B cell (primary cell): ENCODE measurements at regions of chrX and their contacts with region 1.

Region 1: DNA sequence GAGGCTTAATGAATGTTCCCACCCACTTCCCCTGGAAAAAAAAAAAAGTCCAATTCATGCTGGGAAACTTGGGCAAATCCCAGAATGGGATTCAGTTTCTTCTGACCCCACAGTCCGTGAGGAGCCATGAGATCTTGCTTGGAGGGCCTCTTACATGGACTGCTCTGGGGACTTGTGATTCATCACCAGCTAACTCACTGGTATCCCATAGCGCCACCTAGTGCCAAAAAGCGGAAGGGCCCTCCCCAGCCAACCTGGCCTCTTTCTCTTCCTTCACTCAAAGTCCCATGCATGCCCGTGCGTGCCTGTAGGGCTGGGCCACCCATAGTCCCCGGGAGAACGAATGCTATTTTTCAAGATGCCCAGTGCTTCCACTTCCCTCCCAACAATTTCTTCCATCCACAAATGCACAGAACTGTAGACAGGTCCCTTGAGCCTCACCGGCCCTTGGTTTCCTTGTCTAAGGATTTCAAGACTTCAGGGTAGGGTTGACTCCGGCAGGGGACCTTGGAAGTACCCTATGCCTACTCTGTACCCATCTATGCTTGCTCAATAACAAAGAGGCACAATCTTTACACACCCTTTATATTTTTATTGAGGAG is 5.1 kb downstream of the RTL5 start:
- DNase-seq: peak; percentile 80
- ATAC-seq: peak; percentile 62
- H3K4me3 ChIP-seq: no peak overlapping the region
- H3K4me3 Mint-ChIP-seq: no peak overlapping the region
- H3K27ac ChIP-seq: no peak overlapping the region
- H3K27ac Mint-ChIP-seq: peak overlapping the region; percentile 21
- H3K4me1 ChIP-seq: peaks cover 12 to 27% of the 10 kb centered on the region in 2 donors
- H3K4me1 Mint-ChIP-seq: peaks cover 34% of the 10 kb centered on the region
- H3K27me3 ChIP-seq: peaks cover 0 to 5% (median 2%) of the 10 kb centered on the region in 4 experiments
- H3K27me3 Mint-ChIP-seq: peaks cover 4% of the 10 kb centered on the region
- CTCF ChIP-seq: peak; percentile 70

Region 2: DNA sequence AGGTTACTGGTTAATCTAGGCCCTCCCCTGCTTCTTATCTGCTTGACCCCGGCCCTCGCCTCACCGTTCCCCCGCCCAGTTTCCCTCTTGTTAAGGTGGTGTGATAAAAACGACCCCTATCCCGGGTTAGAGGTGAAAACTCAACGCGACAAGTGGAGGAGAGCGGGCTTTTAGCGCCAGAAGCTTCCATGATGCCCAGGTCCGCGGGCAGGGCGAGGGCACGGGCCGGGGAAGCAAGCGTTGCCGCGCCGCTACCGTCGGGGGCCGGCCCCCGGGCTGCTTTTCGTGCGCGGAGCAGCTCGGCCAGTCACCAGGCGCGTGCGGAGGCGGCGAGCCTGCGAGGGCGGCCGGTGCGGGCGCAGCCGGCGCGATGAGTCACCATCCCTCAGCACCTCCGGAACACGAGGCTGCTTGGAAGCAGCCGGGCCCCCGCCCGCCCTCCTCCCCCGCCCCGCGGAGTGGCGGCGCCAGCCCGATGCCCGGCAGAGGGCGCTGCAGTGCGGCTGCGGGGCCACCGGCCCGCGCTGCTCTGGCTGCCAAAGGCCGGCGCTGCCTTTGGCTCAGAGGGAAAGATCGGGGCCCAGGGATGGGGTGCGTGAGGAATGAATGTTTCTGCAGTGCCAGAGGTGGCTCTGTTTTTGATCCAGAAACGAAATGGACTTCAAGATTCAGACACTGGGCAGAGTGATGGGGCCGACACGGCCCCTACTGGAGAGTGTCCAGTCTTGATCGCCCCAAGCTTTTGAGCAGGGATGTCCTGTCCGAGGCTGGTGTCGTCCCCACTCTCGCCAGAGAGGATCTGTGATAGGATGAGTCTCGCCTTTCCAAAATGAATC is 108.1 kb before region 1 on chrX:
- CTCF ChIA-PET with region 1: interaction called, 108 read pairs
- POLR2A ChIA-PET with region 1: interaction called, 4 read pairs
- intact Hi-C with region 1: loop called (anchors 1 kb)
- DNase-seq: peak; percentile 78
- ATAC-seq: peak; percentile 82
- H3K4me3 ChIP-seq: peak overlapping the region in 2 of 5 experiments; percentile 11 to 20
- H3K4me3 Mint-ChIP-seq: peak overlapping the region; percentile 29
- H3K27ac ChIP-seq: no peak overlapping the region
- H3K27ac Mint-ChIP-seq: no peak overlapping the region
- H3K4me1 ChIP-seq: peaks cover 13 to 22% of the 10 kb centered on the region in 2 donors
- H3K4me1 Mint-ChIP-seq: peaks cover 9% of the 10 kb centered on the region
- H3K27me3 ChIP-seq: peaks cover 0 to 26% (median 19%) of the 10 kb centered on the region in 4 experiments
- H3K27me3 Mint-ChIP-seq: peaks cover 9% of the 10 kb centered on the region
- CTCF ChIP-seq: peak; percentile 76

Region 3: DNA sequence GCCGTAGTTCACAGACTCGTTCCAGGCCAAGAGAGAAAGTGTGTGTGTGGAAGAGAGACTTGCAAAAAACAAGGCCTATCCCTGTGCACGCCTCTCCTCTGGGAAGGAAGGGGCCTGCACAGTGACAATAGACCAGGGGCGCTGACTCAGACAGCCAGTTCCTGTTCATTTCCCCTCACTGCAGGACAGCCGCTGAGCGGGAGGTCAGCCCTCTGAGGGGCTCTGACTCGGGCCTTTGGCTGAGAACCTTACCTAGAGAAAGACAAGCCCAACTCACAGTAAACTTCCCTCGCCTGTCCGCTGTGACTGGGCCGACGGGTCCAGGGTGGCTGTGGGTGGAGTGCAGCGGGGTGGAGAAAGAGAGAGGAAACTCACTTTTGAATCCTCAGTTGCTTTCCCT is 47.0 kb before region 1 on chrX:
- CTCF ChIA-PET with region 1: no interaction called
- POLR2A ChIA-PET with region 1: no interaction called
- intact Hi-C with region 1: no loop called
- DNase-seq: no peak
- ATAC-seq: no peak
- H3K4me3 ChIP-seq: no peak overlapping the region
- H3K4me3 Mint-ChIP-seq: no peak overlapping the region
- H3K27ac ChIP-seq: no peak overlapping the region
- H3K27ac Mint-ChIP-seq: no peak overlapping the region
- H3K4me1 ChIP-seq: no peaks in the 10 kb centered on the region
- H3K4me1 Mint-ChIP-seq: peaks cover 4% of the 10 kb centered on the region
- H3K27me3 ChIP-seq: peaks cover 0 to 5% (median 0%) of the 10 kb centered on the region in 4 experiments
- H3K27me3 Mint-ChIP-seq: peaks cover 12% of the 10 kb centered on the region
- CTCF ChIP-seq: no peak

Region 4: DNA sequence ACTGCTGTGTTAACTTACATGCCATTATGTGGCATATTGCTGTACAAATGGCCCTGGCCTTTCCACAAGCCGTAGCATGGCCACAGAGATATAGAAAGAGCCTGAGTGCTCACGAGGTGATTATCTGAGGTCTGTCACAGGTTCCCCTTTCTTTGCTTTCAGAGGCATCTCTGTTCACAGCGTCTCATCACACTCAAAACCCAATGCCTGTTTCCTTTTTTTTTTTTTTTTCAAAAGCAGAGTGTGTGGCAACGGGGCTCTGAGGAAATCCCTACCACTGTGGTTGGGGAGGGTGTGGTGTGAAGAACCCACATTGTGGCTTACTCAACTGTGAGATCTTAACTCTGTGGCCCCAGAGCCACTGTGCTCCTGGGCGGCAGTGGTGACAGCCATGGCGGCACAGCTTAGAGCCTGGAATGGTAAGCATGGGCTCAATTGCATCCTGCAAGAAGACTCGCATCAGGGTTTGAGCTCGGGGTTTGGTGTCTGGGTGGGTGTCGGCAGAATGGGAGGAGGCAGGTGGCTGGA is 25.8 kb before region 1 on chrX:
- CTCF ChIA-PET with region 1: interaction called, 8 read pairs
- POLR2A ChIA-PET with region 1: no interaction called
- intact Hi-C with region 1: loop called (anchors 2 kb)
- DNase-seq: peak; percentile 88
- ATAC-seq: peak; percentile 78
- H3K4me3 ChIP-seq: peak overlapping the region in 2 of 5 experiments; percentile 7 to 36
- H3K4me3 Mint-ChIP-seq: peak overlapping the region; percentile 80
- H3K27ac ChIP-seq: peak overlapping the region; percentile 56 to 60
- H3K27ac Mint-ChIP-seq: peak overlapping the region; percentile 87
- H3K4me1 ChIP-seq: peaks cover 33 to 50% of the 10 kb centered on the region in 2 donors
- H3K4me1 Mint-ChIP-seq: peaks cover 52% of the 10 kb centered on the region
- H3K27me3 ChIP-seq: peaks cover 0 to 18% (median 2%) of the 10 kb centered on the region in 4 experiments
- H3K27me3 Mint-ChIP-seq: no peaks in the 10 kb centered on the region
- CTCF ChIP-seq: no peak

Region 5: DNA sequence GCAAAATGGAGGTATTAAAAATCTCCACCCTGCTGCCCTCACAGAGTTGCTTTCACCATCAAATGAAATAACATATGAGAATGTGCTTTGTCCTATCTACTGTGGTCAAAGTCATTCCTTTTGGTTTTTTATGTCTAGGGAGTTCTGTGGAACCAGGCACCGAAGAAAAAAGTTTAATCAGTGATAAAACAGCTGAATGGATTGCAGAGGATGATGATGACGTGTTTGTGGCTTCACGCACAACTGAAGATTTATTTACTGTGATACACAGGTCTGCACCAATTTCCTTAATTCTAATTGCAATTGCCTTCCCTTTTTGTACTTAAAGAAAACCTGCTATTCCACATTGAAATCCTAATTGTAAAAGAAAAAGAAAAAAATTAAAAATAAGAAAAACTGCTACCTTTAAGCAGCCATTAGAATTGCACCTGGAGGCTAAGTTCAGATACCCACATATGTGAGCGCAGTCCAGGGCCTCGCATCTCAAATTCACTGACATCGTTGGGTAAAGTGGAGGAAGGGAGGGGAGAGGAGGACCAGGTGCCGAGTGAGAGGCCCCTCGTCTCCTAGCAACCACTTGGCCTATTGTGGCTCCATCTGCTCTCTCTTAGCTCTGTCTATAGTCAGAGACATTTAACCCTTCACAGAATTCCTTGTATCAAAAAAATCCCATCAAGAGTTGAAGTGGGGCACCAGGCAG is 15.6 kb after region 1 on chrX:
- CTCF ChIA-PET with region 1: interaction called, 7 read pairs
- POLR2A ChIA-PET with region 1: interaction called, 8 read pairs
- intact Hi-C with region 1: loop called (anchors 2 kb)
- DNase-seq: peak; percentile 35
- ATAC-seq: peak; percentile 81
- H3K4me3 ChIP-seq: no peak overlapping the region
- H3K4me3 Mint-ChIP-seq: peak overlapping the region; percentile 31
- H3K27ac ChIP-seq: no peak overlapping the region
- H3K27ac Mint-ChIP-seq: peak overlapping the region; percentile 71
- H3K4me1 ChIP-seq: peaks cover 4 to 7% of the 10 kb centered on the region in 2 donors
- H3K4me1 Mint-ChIP-seq: peaks cover 19% of the 10 kb centered on the region
- H3K27me3 ChIP-seq: peaks cover 0 to 4% (median 0%) of the 10 kb centered on the region in 4 experiments
- H3K27me3 Mint-ChIP-seq: peaks cover 4% of the 10 kb centered on the region
- CTCF ChIP-seq: no peak

Region 6: DNA sequence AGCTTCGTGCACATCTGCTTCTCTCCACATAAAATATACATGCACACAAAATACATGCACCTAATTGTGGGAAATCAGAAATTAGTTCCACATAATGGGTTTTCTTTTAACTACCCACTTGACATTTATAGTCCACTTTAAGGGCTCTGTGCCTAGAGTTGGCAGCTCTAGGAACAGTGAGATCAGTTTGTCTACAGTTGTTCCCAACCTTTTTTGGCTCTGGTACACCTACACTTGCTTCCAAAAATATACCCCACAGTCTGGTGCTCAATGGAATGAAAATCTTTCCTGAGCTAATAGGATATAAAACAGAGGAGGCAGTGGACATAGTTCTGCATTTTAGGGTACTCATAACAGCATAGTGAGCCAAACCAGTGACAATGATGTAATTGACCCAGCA is 409.9 kb after region 1 on chrX:
- CTCF ChIA-PET with region 1: no interaction called
- POLR2A ChIA-PET with region 1: no interaction called
- intact Hi-C with region 1: no loop called
- DNase-seq: no peak
- ATAC-seq: no peak
- H3K4me3 ChIP-seq: no peak overlapping the region
- H3K4me3 Mint-ChIP-seq: no peak overlapping the region
- H3K27ac ChIP-seq: no peak overlapping the region
- H3K27ac Mint-ChIP-seq: no peak overlapping the region
- H3K4me1 ChIP-seq: no peaks in the 10 kb centered on the region
- H3K4me1 Mint-ChIP-seq: peaks cover 2% of the 10 kb centered on the region
- H3K27me3 ChIP-seq: no peaks in the 10 kb centered on the region
- H3K27me3 Mint-ChIP-seq: no peaks in the 10 kb centered on the region
- CTCF ChIP-seq: no peak